Activated CD4-positive, alpha-beta memory T cell treated with anti-CD3 and anti-CD28 coated beads for 36 hours (primary cell): ENCODE measurements at regions of chr15 and their contacts with region 1.

Region 1: GRCh38 chr15:81265944-81266775 is 57.8 kb downstream of the STARD5 start:
- DNase-seq: peak; percentile 90
- H3K4me3 Mint-ChIP-seq: peak overlapping the region; percentile 54
- H3K27ac Mint-ChIP-seq: no peak overlapping the region
- H3K4me1 Mint-ChIP-seq: peaks cover 18% of the 10 kb centered on the region
- H3K27me3 Mint-ChIP-seq: peaks cover 8% of the 10 kb centered on the region

Region 2: GRCh38 chr15:79689030-79689429 is 1577.1 kb before region 1 on chr15:
- CTCF ChIA-PET with region 1: no interaction called
- POLR2A ChIA-PET with region 1: no interaction called
- intact Hi-C with region 1: no loop called
- DNase-seq: no peak
- H3K4me3 Mint-ChIP-seq: no peak overlapping the region
- H3K27ac Mint-ChIP-seq: no peak overlapping the region
- H3K4me1 Mint-ChIP-seq: no peaks in the 10 kb centered on the region
- H3K27me3 Mint-ChIP-seq: peaks cover 9% of the 10 kb centered on the region

Region 3: GRCh38 chr15:80977627-80978036 is 288.5 kb before region 1 on chr15:
- CTCF ChIA-PET with region 1: interaction called, 51 read pairs
- POLR2A ChIA-PET with region 1: interaction called, 3 read pairs
- intact Hi-C with region 1: loop called (anchors 1 kb)
- DNase-seq: peak; percentile 62
- H3K4me3 Mint-ChIP-seq: no peak overlapping the region
- H3K27ac Mint-ChIP-seq: no peak overlapping the region
- H3K4me1 Mint-ChIP-seq: peaks cover 43% of the 10 kb centered on the region
- H3K27me3 Mint-ChIP-seq: no peaks in the 10 kb centered on the region

Region 4: DNA sequence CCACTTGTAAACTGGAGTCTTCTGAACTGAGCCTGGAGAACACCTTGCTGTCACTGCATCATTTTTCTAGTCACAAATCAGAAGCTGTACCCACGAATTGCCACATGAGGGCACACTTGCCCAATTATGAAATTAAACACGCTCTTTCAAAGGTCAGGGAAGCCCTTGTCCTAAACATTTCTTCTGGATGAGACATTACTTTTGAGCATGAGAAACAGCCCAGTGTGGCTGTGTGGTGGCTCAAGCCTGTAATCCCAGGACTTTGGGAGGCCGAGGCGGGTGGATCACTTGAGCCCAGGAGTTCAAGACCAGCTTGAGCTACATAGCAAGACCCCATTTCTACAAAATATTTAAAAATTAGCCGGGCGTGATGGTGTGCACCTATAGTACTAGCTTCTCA is 159.6 kb before region 1 on chr15:
- CTCF ChIA-PET with region 1: interaction called, 217 read pairs
- POLR2A ChIA-PET with region 1: no interaction called
- intact Hi-C with region 1: loop called (anchors 1 kb)
- DNase-seq: peak; percentile 59
- H3K4me3 Mint-ChIP-seq: no peak overlapping the region
- H3K27ac Mint-ChIP-seq: no peak overlapping the region
- H3K4me1 Mint-ChIP-seq: peaks cover 3% of the 10 kb centered on the region
- H3K27me3 Mint-ChIP-seq: peaks cover 20% of the 10 kb centered on the region

Region 5: DNA sequence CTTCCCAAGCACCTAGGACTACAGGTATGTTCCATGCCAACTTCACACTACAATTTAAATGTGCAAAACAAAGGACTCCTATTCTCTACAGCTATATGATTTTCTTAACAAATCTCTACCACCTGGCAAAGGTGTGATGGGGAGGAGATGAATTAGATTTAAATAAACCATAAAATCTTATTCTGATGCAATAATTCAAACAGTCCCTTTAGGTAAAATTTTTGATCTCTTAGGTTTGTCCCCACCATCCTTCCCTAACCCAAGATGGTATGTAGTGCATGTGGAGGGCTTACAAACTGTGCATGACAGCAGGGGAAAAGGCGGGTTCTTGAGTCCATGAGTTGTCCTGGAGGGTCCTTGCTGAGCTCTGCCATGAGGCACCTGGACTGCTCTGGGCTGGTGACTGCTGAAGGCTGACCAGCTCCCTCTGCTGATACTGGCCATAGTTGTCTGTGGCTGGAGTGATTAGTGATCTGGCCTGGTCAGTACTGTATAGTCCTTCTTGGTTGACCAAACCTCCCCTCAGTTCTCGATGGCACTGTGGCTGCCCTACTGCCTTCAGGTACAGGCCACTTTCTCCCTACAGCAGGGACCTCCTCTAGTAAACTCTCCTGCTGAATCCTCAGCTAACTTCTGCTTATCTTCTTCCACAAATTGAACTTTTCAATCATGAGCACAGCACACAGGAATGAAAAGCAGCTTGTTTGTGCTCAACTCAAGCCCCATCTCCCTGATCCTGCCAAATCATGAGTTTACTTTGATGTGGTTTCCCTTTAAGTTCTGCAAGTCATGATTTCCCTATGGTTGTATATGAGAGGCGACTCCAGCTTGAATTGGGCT is 102.0 kb before region 1 on chr15:
- CTCF ChIA-PET with region 1: interaction called, 259 read pairs
- POLR2A ChIA-PET with region 1: no interaction called
- intact Hi-C with region 1: no loop called
- DNase-seq: no peak
- H3K4me3 Mint-ChIP-seq: no peak overlapping the region
- H3K27ac Mint-ChIP-seq: no peak overlapping the region
- H3K4me1 Mint-ChIP-seq: peaks cover 21% of the 10 kb centered on the region
- H3K27me3 Mint-ChIP-seq: peaks cover 8% of the 10 kb centered on the region

Region 6: DNA sequence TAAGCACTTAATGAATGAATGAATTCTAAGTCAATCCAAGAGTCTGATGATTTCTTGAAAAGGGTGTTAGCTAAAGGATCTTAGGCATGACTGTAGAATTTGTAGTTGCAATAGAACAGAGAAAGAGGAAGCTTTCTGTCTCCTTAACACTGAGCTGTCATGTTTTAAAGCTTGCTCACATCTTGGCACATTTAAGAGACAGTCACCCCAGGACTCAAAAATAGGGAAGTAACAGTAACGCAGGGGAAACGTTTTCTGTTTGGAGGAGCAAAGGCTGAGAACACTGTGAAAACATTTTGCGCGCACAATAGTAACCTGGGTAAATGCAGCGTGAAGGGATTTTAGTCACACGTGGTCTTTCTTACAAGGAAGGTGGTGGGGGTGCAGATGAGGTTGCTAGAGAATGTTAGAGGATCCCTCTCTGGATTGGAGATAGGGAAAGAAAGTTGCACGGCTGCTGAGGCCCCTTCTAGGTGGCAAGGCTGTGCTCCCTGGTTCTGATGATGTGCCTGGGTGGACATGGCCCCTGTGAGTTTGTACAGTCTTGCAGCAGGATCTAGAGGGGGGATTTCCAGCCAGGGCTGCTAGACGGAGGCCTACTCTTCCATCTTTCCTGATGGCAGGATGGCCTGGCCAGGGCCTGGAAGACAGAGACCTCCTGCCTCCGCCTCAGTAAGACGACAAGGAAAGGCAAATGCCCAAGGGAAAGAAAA is 45.7 kb after region 1 on chr15:
- CTCF ChIA-PET with region 1: interaction called, 16 read pairs
- POLR2A ChIA-PET with region 1: no interaction called
- intact Hi-C with region 1: no loop called
- DNase-seq: no peak
- H3K4me3 Mint-ChIP-seq: no peak overlapping the region
- H3K27ac Mint-ChIP-seq: peak overlapping the region; percentile 14
- H3K4me1 Mint-ChIP-seq: peaks cover 59% of the 10 kb centered on the region
- H3K27me3 Mint-ChIP-seq: no peaks in the 10 kb centered on the region

Region 7: GRCh38 chr15:81388436-81388770 is 122.2 kb after region 1 on chr15:
- CTCF ChIA-PET with region 1: interaction called, 18 read pairs
- POLR2A ChIA-PET with region 1: no interaction called
- intact Hi-C with region 1: no loop called
- DNase-seq: no peak
- H3K4me3 Mint-ChIP-seq: no peak overlapping the region
- H3K27ac Mint-ChIP-seq: no peak overlapping the region
- H3K4me1 Mint-ChIP-seq: peaks cover 4% of the 10 kb centered on the region
- H3K27me3 Mint-ChIP-seq: no peaks in the 10 kb centered on the region

Region 8: GRCh38 chr15:81710328-81710727 is 444.2 kb after region 1 on chr15:
- CTCF ChIA-PET with region 1: no interaction called
- POLR2A ChIA-PET with region 1: no interaction called
- intact Hi-C with region 1: no loop called
- DNase-seq: no peak
- H3K4me3 Mint-ChIP-seq: no peak overlapping the region
- H3K27ac Mint-ChIP-seq: no peak overlapping the region
- H3K4me1 Mint-ChIP-seq: no peaks in the 10 kb centered on the region
- H3K27me3 Mint-ChIP-seq: no peaks in the 10 kb centered on the region